Common myeloid progenitor, CD34-positive (primary cell): ENCODE measurements at regions of chr6 and their contacts with region 1.

Region 1: GRCh38 chr6:135423649-135424128 is 73.9 kb downstream of the AHI1 start:
- DNase-seq: peak; percentile 67 to 72 (median 67)
- H3K4me3 ChIP-seq: no peak overlapping the region
- H3K27ac ChIP-seq: no peak overlapping the region
- H3K4me1 ChIP-seq: peaks cover 16 to 63% (median 32%) of the 10 kb centered on the region in 4 experiments
- H3K27me3 ChIP-seq: no peaks in the 10 kb centered on the region

Region 2: DNA sequence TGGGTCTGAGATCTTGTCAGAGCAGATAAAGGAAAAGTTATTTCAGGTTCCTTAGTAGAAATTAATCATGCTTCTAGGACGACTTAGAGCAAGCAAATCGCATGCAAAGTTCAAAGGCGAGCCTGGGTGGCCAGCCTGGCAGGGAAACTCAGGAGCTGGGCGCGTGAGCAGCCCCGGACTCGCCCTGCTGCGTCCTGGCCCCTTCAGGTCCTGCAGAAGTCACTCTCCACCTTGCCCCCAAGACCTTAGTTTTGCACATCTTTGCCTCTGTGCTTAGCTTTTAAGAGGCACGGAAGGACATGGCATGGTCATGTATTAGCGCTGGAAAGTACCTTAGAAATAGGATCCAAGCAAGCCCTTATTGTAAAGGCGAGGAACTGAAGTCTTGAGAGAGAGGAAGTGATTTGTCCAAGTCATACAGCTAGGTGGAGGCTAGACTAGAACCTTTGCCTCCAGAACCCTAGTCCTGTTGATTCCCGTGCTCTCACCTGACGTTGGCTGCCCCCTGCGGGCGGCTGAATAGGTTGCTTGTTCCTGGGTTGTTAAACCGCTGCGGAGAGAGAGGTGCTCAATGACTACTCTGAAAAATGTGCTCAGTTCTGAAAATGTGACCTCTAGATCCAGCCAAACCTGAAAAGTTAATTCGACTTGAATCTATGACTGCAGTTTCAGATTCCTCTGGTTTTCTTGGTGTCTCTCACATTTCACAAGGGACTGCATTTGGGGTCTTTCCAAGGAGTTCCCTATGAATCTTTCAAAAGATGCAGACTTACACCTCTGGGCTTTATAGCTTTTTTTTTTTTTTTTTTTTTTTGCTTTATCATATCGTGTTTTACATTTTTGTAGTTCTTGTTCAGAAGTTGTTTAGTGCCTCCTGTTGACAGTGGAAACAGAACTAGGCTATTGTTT is 239.9 kb before region 1 on chr6:
- CTCF ChIA-PET with region 1: interaction called, 31 read pairs
- POLR2A ChIA-PET with region 1: no interaction called
- DNase-seq: peak; percentile 84 to 90 (median 90)
- H3K4me3 ChIP-seq: peak overlapping the region; percentile 81 to 100 (median 98)
- H3K27ac ChIP-seq: peak overlapping the region; percentile 46 to 84
- H3K4me1 ChIP-seq: peaks cover 22 to 68% (median 45%) of the 10 kb centered on the region in 4 experiments
- H3K27me3 ChIP-seq: no peaks in the 10 kb centered on the region

Region 3: GRCh38 chr6:135191508-135192255 is 232.0 kb before region 1 on chr6:
- CTCF ChIA-PET with region 1: interaction called, 31 read pairs
- POLR2A ChIA-PET with region 1: no interaction called
- DNase-seq: peak; percentile 49 to 87 (median 81)
- H3K4me3 ChIP-seq: peak overlapping the region in 3 of 7 experiments; percentile 21 to 31 (median 22)
- H3K27ac ChIP-seq: peak overlapping the region; percentile 21 to 78
- H3K4me1 ChIP-seq: peaks cover 59 to 93% (median 78%) of the 10 kb centered on the region in 4 experiments
- H3K27me3 ChIP-seq: no peaks in the 10 kb centered on the region

Region 4: GRCh38 chr6:135372758-135373157 is 50.9 kb before region 1 on chr6:
- CTCF ChIA-PET with region 1: no interaction called
- POLR2A ChIA-PET with region 1: no interaction called
- DNase-seq: no peak
- H3K4me3 ChIP-seq: no peak overlapping the region
- H3K27ac ChIP-seq: no peak overlapping the region
- H3K4me1 ChIP-seq: no peaks in the 10 kb centered on the region
- H3K27me3 ChIP-seq: no peaks in the 10 kb centered on the region